ENCODE measurements at regions of chr6 and their contacts with region 1.

Region 1: DNA sequence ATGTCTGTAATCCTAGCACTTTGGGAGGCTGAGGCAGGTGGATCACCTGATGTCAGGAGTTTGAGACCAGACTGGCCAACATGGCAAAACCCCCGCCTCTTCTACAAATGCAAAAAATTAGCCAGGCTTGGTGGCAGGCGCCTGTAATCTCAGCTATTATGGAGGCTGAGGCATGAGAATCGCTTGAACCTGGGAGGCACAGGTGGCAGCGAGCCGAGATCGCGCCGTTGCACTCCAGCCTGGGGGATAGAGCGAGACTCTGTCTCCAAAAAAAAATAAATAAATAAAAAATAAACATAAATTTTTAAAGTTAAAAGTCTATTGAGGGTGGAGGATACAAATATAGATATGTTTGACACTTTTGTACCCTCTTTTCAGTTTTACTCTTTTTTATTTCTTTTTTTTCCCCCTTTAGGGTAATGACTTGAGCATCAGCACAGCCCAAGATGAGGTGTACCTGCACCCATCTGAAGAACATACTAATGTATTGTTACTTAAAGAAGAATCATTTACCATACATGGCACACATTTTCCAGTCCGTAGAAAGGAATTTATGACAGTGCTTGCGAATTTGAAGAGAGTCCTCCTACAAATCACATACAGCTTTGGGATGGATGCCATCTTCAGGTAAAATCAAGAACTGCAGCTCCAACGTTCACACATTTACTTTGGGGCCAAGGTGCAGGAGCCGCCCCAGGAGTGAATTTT is 368.9 kb downstream of the LAMA2 start:
- DNase-seq: peak in 5 of 9 experiments; percentile 2 to 70 (median 33)
- ATAC-seq: peak; percentile 48
- H3K4me3 ChIP-seq: no peak overlapping the region
- H3K4me3 Mint-ChIP-seq: no peak overlapping the region
- H3K27ac ChIP-seq: no peak overlapping the region
- H3K27ac Mint-ChIP-seq: no peak overlapping the region
- H3K4me1 ChIP-seq: no peaks in the 10 kb centered on the region
- H3K4me1 Mint-ChIP-seq: peaks cover 3% of the 10 kb centered on the region
- H3K27me3 ChIP-seq: peaks cover 0 to 7% of the 10 kb centered on the region in 2 experiments
- H3K27me3 Mint-ChIP-seq: peaks cover 17% of the 10 kb centered on the region
- CTCF ChIP-seq: peak; percentile 70

Region 2: DNA sequence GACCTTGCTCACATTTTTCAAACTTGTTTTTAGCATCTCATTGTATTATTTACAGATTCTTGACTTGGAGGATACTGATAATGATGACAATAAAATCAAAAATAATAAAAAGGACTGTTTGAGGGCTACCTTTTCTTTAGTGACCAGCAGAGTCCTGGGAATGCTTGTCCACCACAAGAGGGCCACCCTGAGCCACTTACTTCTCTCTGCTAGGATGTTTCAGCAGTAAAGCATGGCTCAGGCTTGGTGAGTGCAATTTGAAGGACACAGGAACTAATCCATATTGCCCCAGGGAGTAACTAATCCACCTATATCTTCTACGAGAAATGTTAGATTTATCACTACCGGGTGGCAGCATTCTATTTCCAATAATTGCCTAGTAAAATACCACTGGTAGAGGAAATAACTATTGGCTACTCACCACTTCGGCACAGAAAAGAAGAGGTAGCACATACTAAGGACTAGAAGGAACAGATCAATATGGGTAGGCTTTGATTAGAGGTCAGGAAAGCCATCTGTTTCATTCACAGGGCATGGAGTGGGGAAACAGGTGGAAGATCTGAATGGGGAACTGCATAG is 1786.9 kb before region 1 on chr6:
- CTCF ChIA-PET with region 1: no interaction called
- POLR2A ChIA-PET with region 1: no interaction called
- intact Hi-C with region 1: loop called (anchors 5 to 10 kb)
- DNase-seq: peak; percentile 17 to 68 (median 50)
- ATAC-seq: peak; percentile 51
- H3K4me3 ChIP-seq: no peak overlapping the region
- H3K4me3 Mint-ChIP-seq: no peak overlapping the region
- H3K27ac ChIP-seq: no peak overlapping the region
- H3K27ac Mint-ChIP-seq: no peak overlapping the region
- H3K4me1 ChIP-seq: no peaks in the 10 kb centered on the region
- H3K4me1 Mint-ChIP-seq: no peaks in the 10 kb centered on the region
- H3K27me3 ChIP-seq: no peaks in the 10 kb centered on the region
- H3K27me3 Mint-ChIP-seq: no peaks in the 10 kb centered on the region
- CTCF ChIP-seq: peak; percentile 72

Region 3: DNA sequence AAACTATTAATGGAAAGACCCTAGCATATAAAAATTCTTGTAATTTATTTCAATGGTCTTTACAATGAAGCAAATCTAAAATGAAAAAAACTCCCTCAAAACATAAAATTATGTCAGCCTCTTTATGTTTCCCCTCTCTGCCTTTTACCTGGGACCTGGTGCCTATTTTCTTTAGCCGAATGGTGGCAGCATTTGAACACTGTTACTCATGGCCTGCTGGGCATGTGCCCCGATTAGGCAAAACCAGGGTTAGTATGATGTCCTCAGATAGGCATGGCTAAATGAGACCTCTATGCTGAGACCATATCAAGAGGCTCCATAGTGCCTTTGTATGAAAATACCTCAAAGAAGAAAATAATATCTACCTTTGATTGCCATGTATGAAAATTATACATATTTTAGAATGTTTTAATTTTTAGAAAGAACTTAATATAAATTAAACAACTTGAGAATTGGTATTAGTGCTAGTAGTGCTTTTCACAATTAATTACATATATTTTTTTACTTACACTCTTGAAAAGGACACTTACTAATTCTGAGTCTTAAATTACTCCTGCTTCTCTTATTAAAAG is 1697.3 kb before region 1 on chr6:
- CTCF ChIA-PET with region 1: no interaction called
- POLR2A ChIA-PET with region 1: no interaction called
- intact Hi-C with region 1: loop called in 1 of 2 experiments (anchors 5 kb)
- DNase-seq: peak in 2 of 9 experiments; percentile 27 to 39
- ATAC-seq: no peak
- H3K4me3 ChIP-seq: no peak overlapping the region
- H3K4me3 Mint-ChIP-seq: no peak overlapping the region
- H3K27ac ChIP-seq: no peak overlapping the region
- H3K27ac Mint-ChIP-seq: no peak overlapping the region
- H3K4me1 ChIP-seq: no peaks in the 10 kb centered on the region
- H3K4me1 Mint-ChIP-seq: no peaks in the 10 kb centered on the region
- H3K27me3 ChIP-seq: no peaks in the 10 kb centered on the region
- H3K27me3 Mint-ChIP-seq: peaks cover 30% of the 10 kb centered on the region
- CTCF ChIP-seq: no peak

Region 4: DNA sequence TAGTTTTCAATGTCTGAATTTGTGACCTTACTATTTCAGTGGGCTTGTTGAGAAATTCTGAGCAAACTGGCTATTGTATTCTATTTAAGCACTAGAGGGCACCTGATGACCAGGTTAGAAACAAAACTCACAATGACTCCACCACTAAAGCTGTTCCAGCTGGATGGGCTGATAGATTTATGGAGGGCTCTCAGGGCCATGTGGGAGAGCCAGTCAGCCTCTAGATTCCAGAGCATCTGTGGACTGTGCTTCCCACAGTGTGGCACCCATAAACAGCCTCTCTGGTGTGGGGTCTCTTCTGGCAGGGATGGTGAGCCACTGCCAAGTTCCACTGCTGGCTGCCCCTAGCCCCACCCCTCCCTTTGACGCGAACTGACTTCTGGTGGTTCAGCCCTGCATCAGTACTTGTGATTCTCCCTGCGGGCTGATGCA is 1645.7 kb before region 1 on chr6:
- CTCF ChIA-PET with region 1: interaction called, 3 read pairs
- POLR2A ChIA-PET with region 1: no interaction called
- intact Hi-C with region 1: loop called in 1 of 2 experiments (anchors 5 kb)
- DNase-seq: peak in 3 of 9 experiments; percentile 19 to 45 (median 33)
- ATAC-seq: no peak
- H3K4me3 ChIP-seq: no peak overlapping the region
- H3K4me3 Mint-ChIP-seq: no peak overlapping the region
- H3K27ac ChIP-seq: no peak overlapping the region
- H3K27ac Mint-ChIP-seq: no peak overlapping the region
- H3K4me1 ChIP-seq: no peaks in the 10 kb centered on the region
- H3K4me1 Mint-ChIP-seq: no peaks in the 10 kb centered on the region
- H3K27me3 ChIP-seq: no peaks in the 10 kb centered on the region
- H3K27me3 Mint-ChIP-seq: peaks cover 2% of the 10 kb centered on the region
- CTCF ChIP-seq: peak; percentile 15

Region 5: DNA sequence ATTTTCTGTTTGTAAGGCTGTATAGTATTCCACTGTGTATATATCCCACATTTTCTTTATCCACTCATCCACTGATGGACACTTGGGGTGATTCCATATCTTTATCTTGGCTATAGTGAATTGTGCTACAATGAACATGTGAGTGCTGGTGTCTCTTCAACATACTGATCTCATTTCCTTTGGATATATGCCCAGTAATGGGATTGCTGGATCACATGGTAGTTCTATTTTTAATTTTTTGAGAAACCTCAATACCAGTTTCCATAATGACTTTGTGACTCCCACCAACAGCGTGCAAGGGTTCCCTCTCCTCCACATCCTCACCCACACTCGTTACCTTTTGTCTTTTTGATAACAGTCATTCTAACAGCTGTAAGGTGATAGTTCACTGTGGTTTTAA is 292.2 kb after region 1 on chr6:
- CTCF ChIA-PET with region 1: no interaction called
- POLR2A ChIA-PET with region 1: no interaction called
- intact Hi-C with region 1: no loop called
- DNase-seq: no peak
- ATAC-seq: no peak
- H3K4me3 ChIP-seq: no peak overlapping the region
- H3K4me3 Mint-ChIP-seq: no peak overlapping the region
- H3K27ac ChIP-seq: no peak overlapping the region
- H3K27ac Mint-ChIP-seq: no peak overlapping the region
- H3K4me1 ChIP-seq: no peaks in the 10 kb centered on the region
- H3K4me1 Mint-ChIP-seq: no peaks in the 10 kb centered on the region
- H3K27me3 ChIP-seq: no peaks in the 10 kb centered on the region
- H3K27me3 Mint-ChIP-seq: no peaks in the 10 kb centered on the region
- CTCF ChIP-seq: no peak